KBM-7 (cell line): ENCODE measurements at regions of chr15 and their contacts with region 1.

Region 1: GRCh38 chr15:55407949-55408791 is at the starts of genes CCPG1 and PIERCE2:
- DNase-seq: peak; percentile 97

Region 2: DNA sequence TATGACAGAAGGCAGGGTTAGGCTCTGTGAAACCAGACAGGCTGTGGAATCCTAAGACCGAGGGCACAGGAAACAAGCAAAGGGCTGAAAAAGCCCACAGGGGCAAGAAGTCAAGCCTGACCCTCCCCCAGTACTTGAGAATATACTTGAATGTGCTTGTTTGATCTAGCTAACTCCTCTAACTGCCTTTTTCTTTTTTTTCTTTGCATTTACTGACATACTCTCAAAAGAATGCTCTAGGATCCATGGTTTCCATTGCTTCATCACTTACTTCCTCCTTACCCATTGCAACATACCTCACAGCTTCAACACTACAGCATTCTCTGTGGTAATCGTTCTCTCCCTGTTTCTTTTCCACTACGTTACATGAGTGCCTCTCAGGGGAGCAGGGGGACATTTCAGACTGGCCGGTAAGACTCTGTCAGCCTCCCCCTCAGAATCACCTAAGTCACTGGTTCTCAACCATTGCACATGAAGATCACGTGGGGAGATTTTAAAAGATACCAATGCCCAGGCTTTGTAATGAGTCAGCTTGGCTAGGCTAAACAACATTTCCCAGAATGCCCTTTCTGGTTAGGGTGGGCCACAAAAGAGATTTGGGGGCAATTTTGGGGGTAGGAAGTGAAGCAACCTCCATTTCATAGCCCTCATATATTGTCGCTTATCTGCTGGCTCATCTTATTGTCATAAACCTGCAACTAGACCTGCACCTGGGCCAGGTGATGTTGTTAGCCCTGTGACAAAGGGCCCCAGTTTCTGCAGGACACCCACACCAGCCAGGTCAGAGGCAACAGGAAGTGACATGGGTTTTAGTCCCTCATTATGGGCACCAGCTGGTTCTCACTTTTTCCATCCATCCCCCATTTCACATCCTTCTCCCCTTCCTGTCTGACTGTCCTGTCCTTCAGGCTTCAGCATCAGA is 186.8 kb before region 1 on chr15:
- in situ Hi-C with region 1: loop called (anchors 25 kb)
- DNase-seq: peak; percentile 94